ENCODE measurements at regions of chr19 and their contacts with region 1.

Region 1: DNA sequence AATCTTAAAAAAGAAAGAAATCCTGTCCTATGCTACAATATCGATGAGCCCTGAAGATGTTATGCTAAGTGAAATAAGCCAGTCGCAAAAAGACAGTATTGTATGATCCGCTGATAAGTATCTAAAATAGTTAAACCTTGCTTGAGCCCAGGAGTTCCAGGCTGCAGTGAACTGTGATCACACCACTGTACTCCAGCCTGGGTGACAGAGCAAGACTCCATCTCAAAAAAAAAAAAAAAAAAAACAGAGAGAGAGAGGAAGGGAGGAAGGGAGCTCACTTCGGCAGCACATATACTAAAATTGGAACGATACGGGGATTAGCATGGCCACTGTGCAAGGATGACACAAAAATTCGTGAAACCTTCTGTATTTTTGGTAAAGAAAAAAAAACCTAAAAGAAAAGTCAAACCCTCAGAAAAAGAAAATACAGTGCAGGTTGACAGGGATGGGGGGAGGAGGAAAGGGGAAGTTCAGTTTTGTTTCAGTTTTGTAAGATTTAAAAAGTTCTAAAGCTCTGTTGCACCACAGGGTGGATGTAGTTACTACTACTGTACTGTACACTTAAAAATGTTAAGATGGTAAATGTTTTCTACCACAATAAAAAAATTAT is 8.4 kb downstream of the CLASRP start:
- H3K4me3 ChIP-seq: no peak overlapping the region
- H3K27ac ChIP-seq: peak overlapping the region; percentile 24; the same call in 1 of the 2 replicates
- H3K4me1 ChIP-seq: no peaks in the 10 kb centered on the region
- CTCF ChIP-seq: no peak

Region 2: GRCh38 chr19:45059278-45059965 is 12.1 kb after region 1 on chr19:
- CTCF ChIA-PET with region 1: interaction called, 65 read pairs
- POLR2A ChIA-PET with region 1: interaction called, 3 read pairs
- H3K4me3 ChIP-seq: no peak overlapping the region
- H3K27ac ChIP-seq: no peak overlapping the region
- H3K4me1 ChIP-seq: no peaks in the 10 kb centered on the region
- CTCF ChIP-seq: peak; percentile 81; the same call in 1 of the 2 replicates

Region 3: GRCh38 chr19:45153339-45154063 is 106.2 kb after region 1 on chr19:
- CTCF ChIA-PET with region 1: no interaction called
- POLR2A ChIA-PET with region 1: interaction called, 10 read pairs
- H3K4me3 ChIP-seq: no peak overlapping the region
- H3K27ac ChIP-seq: no peak overlapping the region
- H3K4me1 ChIP-seq: peaks cover 2% of the 10 kb centered on the region; the same call in 1 of the 2 replicates
- CTCF ChIP-seq: no peak